A673 (cell line): ENCODE measurements at regions of chr16 and their contacts with region 1.

Region 1: GRCh38 chr16:11255737-11256660 is at the start of gene SOCS1:
- DNase-seq: peak; percentile 84
- H3K4me3 ChIP-seq: peak within 1 kb of the TSS; percentile 73
- H3K27ac ChIP-seq: peak within 1 kb of the TSS; percentile 72
- H3K4me1 ChIP-seq: peaks cover 14% of the 10 kb centered on the region
- H3K27me3 ChIP-seq: peaks cover 16% of the 10 kb centered on the region
- CTCF ChIP-seq: peak; percentile 59
- total RNA-seq, gene SOCS1: 2.3 and 2.6 TPM in 2 replicates

Region 2: GRCh38 chr16:9869776-9870175 is 1386.2 kb before region 1 on chr16:
- CTCF ChIA-PET with region 1: no interaction called
- POLR2A ChIA-PET with region 1: no interaction called
- intact Hi-C with region 1: no loop called
- DNase-seq: no peak
- H3K4me3 ChIP-seq: no peak overlapping the region
- H3K27ac ChIP-seq: no peak overlapping the region
- H3K4me1 ChIP-seq: no peaks in the 10 kb centered on the region
- H3K27me3 ChIP-seq: no peaks in the 10 kb centered on the region
- CTCF ChIP-seq: no peak

Region 3: GRCh38 chr16:10950393-10950792 is 305.6 kb before region 1 on chr16:
- CTCF ChIA-PET with region 1: interaction called, 10 read pairs
- POLR2A ChIA-PET with region 1: no interaction called
- intact Hi-C with region 1: no loop called
- DNase-seq: no peak
- H3K4me3 ChIP-seq: no peak overlapping the region
- H3K27ac ChIP-seq: no peak overlapping the region
- H3K4me1 ChIP-seq: peaks cover 41% of the 10 kb centered on the region
- H3K27me3 ChIP-seq: no peaks in the 10 kb centered on the region
- CTCF ChIP-seq: no peak

Region 4: GRCh38 chr16:10971560-10971961 is 284.4 kb before region 1 on chr16:
- CTCF ChIA-PET with region 1: interaction called, 14 read pairs
- POLR2A ChIA-PET with region 1: no interaction called
- intact Hi-C with region 1: loop called (anchors 1 kb)
- DNase-seq: peak; percentile 86
- H3K4me3 ChIP-seq: no peak overlapping the region
- H3K27ac ChIP-seq: no peak overlapping the region
- H3K4me1 ChIP-seq: no peaks in the 10 kb centered on the region
- H3K27me3 ChIP-seq: no peaks in the 10 kb centered on the region
- CTCF ChIP-seq: peak; percentile 75

Region 5: GRCh38 chr16:11105038-11105903 is 150.7 kb before region 1 on chr16:
- CTCF ChIA-PET with region 1: interaction called, 4 read pairs
- POLR2A ChIA-PET with region 1: no interaction called
- intact Hi-C with region 1: loop called (anchors 5 kb)
- DNase-seq: peak; percentile 95
- H3K4me3 ChIP-seq: no peak overlapping the region
- H3K27ac ChIP-seq: peak overlapping the region; percentile 59
- H3K4me1 ChIP-seq: peaks cover 30% of the 10 kb centered on the region
- H3K27me3 ChIP-seq: no peaks in the 10 kb centered on the region
- CTCF ChIP-seq: no peak

Region 6: DNA sequence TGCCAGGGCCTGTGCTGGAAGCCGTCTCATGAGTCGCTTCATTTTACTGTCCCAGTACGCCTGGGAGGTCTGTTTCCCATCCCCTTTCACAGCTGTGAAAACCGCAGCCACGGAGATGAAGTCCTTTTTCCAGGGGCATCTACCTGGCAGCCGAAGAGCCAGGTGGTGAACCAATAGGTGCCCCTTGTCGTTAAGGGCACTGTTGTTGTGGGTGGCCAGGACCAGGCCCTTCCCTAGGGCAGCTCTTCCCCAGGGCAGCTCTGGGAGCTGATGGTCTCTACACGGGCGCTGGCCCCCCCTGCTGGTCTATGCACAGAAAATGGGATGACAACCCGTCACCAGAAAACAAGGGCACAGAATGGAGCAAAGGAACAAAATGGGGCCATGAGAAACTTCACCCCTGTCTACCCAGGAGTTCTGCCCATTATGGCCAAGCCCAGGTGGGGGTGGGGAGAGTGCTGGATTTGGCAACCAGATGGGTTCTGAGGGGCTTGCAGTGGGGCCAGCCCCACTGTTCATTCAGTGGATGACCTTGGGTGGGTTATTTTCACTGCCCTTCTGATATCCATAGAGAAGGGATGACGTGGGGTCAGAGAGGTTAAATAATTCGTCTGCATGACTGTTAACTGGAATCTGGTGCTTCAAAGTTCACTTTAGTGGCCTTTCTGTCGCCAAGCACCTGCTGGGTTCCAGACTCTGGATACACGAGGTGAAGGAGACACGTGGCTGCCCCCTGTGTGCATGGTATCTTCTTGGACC is 100.8 kb after region 1 on chr16:
- CTCF ChIA-PET with region 1: interaction called, 3 read pairs
- POLR2A ChIA-PET with region 1: no interaction called
- intact Hi-C with region 1: loop called (anchors 1 kb)
- DNase-seq: peak; percentile 82
- H3K4me3 ChIP-seq: no peak overlapping the region
- H3K27ac ChIP-seq: no peak overlapping the region
- H3K4me1 ChIP-seq: peaks cover 29% of the 10 kb centered on the region
- H3K27me3 ChIP-seq: no peaks in the 10 kb centered on the region
- CTCF ChIP-seq: peak; percentile 87

Region 7: DNA sequence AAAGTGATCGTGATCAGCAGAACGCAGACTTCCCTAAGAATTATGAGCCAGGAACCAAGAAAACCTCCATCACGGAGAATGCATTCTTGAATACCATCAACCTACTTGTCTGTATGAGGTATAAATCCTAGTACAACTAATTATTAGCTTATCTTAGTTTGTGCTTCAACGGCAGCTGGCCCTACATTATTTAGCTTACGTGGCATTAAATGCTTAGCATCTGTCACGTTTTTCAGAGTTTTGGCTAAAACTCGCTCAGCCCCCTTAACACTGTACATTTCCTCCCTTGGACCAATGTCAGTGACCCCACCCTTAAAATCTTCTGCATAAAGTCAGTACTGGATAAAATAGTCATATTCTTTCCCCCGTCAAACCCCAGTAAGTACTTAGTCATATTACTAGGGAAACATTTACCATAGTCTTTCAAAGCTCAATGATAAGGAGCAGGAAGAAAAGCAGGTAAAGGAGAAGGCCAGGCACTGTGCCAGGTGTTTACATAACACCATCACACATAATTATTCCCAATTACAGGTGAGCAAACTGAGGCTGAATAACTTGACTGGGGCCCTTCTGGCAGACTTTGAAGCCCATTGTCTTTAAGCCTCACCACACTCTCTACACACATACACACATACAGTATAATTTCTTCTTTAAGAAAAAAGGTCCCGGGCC is 503.3 kb after region 1 on chr16:
- CTCF ChIA-PET with region 1: no interaction called
- POLR2A ChIA-PET with region 1: no interaction called
- intact Hi-C with region 1: no loop called
- DNase-seq: no peak
- H3K4me3 ChIP-seq: no peak overlapping the region
- H3K27ac ChIP-seq: no peak overlapping the region
- H3K4me1 ChIP-seq: no peaks in the 10 kb centered on the region
- H3K27me3 ChIP-seq: no peaks in the 10 kb centered on the region
- CTCF ChIP-seq: no peak